ENCODE measurements at regions of chr10 and their contacts with region 1.

Region 1: GRCh38 chr10:69051303-69051702 is 36.6 kb upstream of the SRGN start:
- DNase-seq: peak; percentile 50
- ATAC-seq: peak; percentile 85
- H3K4me3 Mint-ChIP-seq: peak overlapping the region; percentile 44
- H3K27ac Mint-ChIP-seq: peak overlapping the region; percentile 83
- H3K4me1 Mint-ChIP-seq: peaks cover 43% of the 10 kb centered on the region
- H3K27me3 Mint-ChIP-seq: no peaks in the 10 kb centered on the region

Region 2: DNA sequence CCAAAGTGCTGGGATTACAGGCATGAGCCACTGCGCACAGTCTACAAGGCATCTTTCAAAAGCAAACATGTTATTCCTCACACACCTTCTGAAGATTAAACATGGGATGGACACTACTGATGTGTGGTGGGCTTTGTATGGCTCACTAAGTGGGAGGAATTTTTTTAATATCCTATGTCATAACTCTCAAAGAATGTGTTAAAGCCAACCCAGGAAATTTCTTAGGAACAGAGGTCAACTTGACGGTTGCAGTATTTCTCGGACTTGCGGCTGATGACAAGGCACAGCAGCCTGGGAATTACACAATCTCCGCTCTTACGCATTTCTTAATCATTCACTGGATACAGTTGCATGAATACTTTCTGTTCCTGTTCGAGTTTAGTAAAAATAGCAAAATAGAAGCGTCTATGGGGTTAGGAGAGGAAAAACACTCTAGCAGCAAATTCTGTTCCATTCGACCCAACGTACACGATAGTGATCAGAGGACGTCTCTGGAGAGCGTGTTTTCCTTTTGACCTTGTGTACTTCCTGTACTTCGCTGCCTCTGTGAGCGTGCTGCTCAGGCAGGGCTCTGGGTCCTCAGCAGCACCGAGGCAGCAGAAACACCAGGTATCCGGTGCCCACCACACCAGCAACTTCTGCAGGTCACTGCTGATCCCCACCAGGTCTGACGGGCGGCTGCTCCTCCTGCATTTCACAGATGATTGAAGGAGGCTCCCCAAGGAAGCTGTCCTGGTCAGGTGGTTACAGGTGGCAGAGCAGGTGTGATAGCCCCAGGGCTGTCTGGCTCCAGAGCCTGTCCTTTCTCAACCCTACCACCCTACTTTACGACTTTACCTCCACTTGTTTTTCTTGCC is 10.2 kb after region 1 on chr10:
- POLR2A ChIA-PET with region 1: interaction called, 10 read pairs
- DNase-seq: peak; percentile 55
- ATAC-seq: peak; percentile 84
- H3K4me3 Mint-ChIP-seq: peak overlapping the region; percentile 83
- H3K27ac Mint-ChIP-seq: peak overlapping the region; percentile 82
- H3K4me1 Mint-ChIP-seq: peaks cover 45% of the 10 kb centered on the region
- H3K27me3 Mint-ChIP-seq: peaks cover 4% of the 10 kb centered on the region

Region 3: DNA sequence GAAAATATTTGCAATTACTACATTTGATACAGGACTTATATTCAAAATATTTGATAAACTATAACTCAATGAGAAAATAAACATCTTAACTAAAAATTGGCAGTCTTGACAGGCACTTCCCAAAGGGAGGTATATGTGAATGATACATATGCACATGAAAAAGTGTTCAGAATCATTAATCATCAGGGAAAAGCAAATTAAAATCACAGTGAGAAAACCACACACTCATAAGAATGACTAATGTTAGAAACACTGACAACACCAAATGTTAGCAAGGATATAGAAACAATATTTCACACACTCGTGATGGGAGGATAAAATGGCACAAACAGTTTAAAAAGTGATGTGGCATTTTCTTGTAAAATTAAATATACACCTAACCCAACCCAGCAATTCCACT is 68.6 kb after region 1 on chr10:
- POLR2A ChIA-PET with region 1: no interaction called
- DNase-seq: no peak
- ATAC-seq: no peak
- H3K4me3 Mint-ChIP-seq: no peak overlapping the region
- H3K27ac Mint-ChIP-seq: no peak overlapping the region
- H3K4me1 Mint-ChIP-seq: peaks cover 6% of the 10 kb centered on the region
- H3K27me3 Mint-ChIP-seq: peaks cover 8% of the 10 kb centered on the region

Measured in activated naive CD8-positive, alpha-beta T cell treated with anti-CD3 and anti-CD28 coated beads, Interleukin-2, amount 10 ng/mL, durations not matched to agents 7 days and 5 days (primary cell).